Activated CD4-positive, alpha-beta memory T cell treated with anti-CD3 and anti-CD28 coated beads for 36 hours (primary cell): ENCODE measurements at regions of chr1 and their contacts with region 1.

Region 1: GRCh38 chr1:16420424-16421118 is 16.7 kb downstream of the SPATA21 start:
- DNase-seq: peak; percentile 91
- H3K4me3 Mint-ChIP-seq: peak overlapping the region; percentile 17
- H3K27ac Mint-ChIP-seq: peak overlapping the region; percentile 72
- H3K4me1 Mint-ChIP-seq: peaks cover 32% of the 10 kb centered on the region
- H3K27me3 Mint-ChIP-seq: no peaks in the 10 kb centered on the region

Region 2: GRCh38 chr1:16386454-16387113 is 34.0 kb before region 1 on chr1:
- CTCF ChIA-PET with region 1: no interaction called
- POLR2A ChIA-PET with region 1: no interaction called
- intact Hi-C with region 1: loop called (anchors 2 kb)
- DNase-seq: no peak
- H3K4me3 Mint-ChIP-seq: peak overlapping the region; percentile 37
- H3K27ac Mint-ChIP-seq: peak overlapping the region; percentile 5
- H3K4me1 Mint-ChIP-seq: peaks cover 69% of the 10 kb centered on the region
- H3K27me3 Mint-ChIP-seq: no peaks in the 10 kb centered on the region

Region 3: GRCh38 chr1:16521288-16521583 is 100.7 kb after region 1 on chr1:
- CTCF ChIA-PET with region 1: no interaction called
- POLR2A ChIA-PET with region 1: no interaction called
- intact Hi-C with region 1: no loop called
- DNase-seq: no peak
- H3K4me3 Mint-ChIP-seq: no peak overlapping the region
- H3K27ac Mint-ChIP-seq: no peak overlapping the region
- H3K4me1 Mint-ChIP-seq: no peaks in the 10 kb centered on the region
- H3K27me3 Mint-ChIP-seq: peaks cover 32% of the 10 kb centered on the region